ENCODE measurements at regions of chr1 and their contacts with region 1.

Region 1: DNA sequence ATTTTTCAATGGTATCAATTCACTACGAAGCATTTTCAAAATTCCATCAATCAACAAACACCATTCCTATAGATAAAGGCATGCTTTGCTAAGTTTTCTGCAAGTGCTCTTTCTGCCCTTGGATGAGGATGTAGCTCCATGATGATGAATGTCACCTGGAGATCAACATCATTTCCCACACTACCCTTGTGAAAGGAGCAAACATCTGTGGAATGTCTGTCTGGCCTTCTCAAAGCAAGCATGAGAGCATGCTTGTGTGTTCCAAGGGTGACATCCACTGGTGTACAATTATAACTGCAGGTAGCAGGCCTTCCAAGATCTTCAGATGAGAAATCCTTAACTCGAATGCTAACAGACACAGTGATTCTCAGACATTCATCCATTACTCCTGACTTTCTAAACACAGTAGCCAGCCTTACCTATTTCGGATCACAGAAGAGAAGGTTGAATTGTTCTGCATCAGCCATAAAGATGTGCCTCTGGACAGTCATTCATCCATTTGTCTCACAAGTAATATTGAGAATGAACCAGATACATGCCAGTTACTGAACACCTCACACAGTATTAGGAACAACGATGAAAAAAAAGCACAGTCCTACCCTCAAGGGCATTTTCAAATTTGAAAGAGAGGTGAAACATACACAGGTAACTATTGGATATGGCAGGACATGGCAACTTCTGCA is 162.4 kb downstream of the TPR start:
- DNase-seq: peak; percentile 63
- ATAC-seq: peak; percentile 98
- H3K4me3 ChIP-seq: no peak overlapping the region
- H3K27ac ChIP-seq: no peak overlapping the region
- H3K4me1 ChIP-seq: no peaks in the 10 kb centered on the region
- H3K27me3 ChIP-seq: no peaks in the 10 kb centered on the region
- CTCF ChIP-seq: peak; percentile 83

Region 2: DNA sequence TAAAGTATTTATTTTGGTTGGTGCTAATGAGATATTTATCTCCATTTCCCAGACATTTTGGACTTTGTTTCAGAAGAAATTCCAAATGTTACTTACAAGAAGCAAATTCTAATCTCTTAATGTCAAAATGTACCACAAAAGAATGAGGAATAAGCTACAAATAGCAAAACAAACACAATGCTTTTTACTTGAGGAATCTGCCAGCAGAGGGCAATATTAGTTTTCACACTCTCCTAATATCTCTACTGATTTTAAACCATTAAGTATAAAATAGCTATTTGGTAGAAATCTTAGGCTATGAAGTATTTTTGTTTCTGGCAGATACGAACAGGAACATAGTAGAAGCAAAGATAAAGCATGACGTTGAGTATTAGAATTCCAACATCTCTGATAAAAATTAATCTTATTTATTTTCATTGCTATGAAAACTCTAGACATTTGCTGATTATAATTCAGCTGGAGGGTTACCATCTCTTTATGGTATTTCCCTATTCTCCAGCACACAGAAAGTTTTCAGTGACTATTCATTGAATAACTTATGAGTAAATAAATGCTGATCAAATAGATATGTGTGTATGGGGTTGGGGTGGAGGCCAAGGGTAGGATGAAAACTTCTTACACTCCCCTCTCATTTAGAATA is 491.9 kb before region 1 on chr1:
- CTCF ChIA-PET with region 1: no interaction called
- POLR2A ChIA-PET with region 1: no interaction called
- in situ Hi-C with region 1: no loop called
- intact Hi-C with region 1: loop called (anchors 1 kb)
- DNase-seq: no peak
- ATAC-seq: no peak
- H3K4me3 ChIP-seq: no peak overlapping the region
- H3K27ac ChIP-seq: no peak overlapping the region
- H3K4me1 ChIP-seq: no peaks in the 10 kb centered on the region
- H3K27me3 ChIP-seq: no peaks in the 10 kb centered on the region
- CTCF ChIP-seq: peak; percentile 60; the same call in 1 of the 2 replicates

Region 3: DNA sequence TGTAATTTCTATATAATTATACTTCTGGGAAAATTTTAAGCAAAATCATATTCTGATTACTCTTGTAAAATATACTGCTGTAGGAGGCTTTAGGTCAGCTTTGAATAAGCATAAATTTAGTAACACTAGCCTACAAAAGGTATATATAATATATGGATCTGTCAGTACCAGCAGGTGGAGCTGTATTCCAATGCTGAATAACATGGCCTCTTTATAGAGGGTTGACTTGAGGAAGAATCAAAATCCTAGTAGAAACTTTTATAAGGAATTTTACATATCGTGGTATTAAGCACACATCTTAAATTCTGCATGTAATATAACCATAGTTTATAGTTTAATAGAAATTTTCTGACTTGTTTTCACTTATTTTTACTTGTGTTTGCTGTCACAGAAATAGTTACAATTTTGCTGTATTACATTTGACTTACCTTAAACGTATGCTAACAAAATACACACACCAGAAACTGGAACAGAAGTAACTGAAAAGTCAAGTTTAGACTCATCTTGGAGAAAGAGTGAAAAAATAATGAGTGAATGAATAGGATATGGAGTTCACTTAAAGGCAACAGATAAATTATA is 399.2 kb before region 1 on chr1:
- CTCF ChIA-PET with region 1: no interaction called
- POLR2A ChIA-PET with region 1: no interaction called
- in situ Hi-C with region 1: no loop called
- intact Hi-C with region 1: loop called (anchors 1 kb)
- DNase-seq: peak; percentile 22
- ATAC-seq: peak; percentile 94
- H3K4me3 ChIP-seq: no peak overlapping the region
- H3K27ac ChIP-seq: no peak overlapping the region
- H3K4me1 ChIP-seq: no peaks in the 10 kb centered on the region
- H3K27me3 ChIP-seq: no peaks in the 10 kb centered on the region
- CTCF ChIP-seq: peak; percentile 67; the same call in 1 of the 2 replicates

Region 4: GRCh38 chr1:186155594-186155993 is 57.1 kb before region 1 on chr1:
- CTCF ChIA-PET with region 1: no interaction called
- POLR2A ChIA-PET with region 1: no interaction called
- in situ Hi-C with region 1: no loop called
- intact Hi-C with region 1: loop called (anchors 10 kb)
- DNase-seq: peak; percentile 39
- ATAC-seq: peak; percentile 68; the same call in 1 of the 2 replicates
- H3K4me3 ChIP-seq: no peak overlapping the region
- H3K27ac ChIP-seq: no peak overlapping the region
- H3K4me1 ChIP-seq: peaks cover 4% of the 10 kb centered on the region; the same call in 1 of the 2 replicates
- H3K27me3 ChIP-seq: no peaks in the 10 kb centered on the region
- CTCF ChIP-seq: peak; percentile 39; the same call in 1 of the 2 replicates